CD4-positive, alpha-beta T cell (primary cell): ENCODE measurements at regions of chr6 and their contacts with region 1.

Region 1: GRCh38 chr6:142207265-142207877 is 60.3 kb downstream of the VTA1 start:
- DNase-seq: peak; percentile 5 to 68 (median 26)
- ATAC-seq: peak; percentile 64
- H3K4me3 ChIP-seq: no peak overlapping the region
- H3K4me3 Mint-ChIP-seq: no peak overlapping the region
- H3K27ac ChIP-seq: no peak overlapping the region
- H3K27ac Mint-ChIP-seq: peak overlapping the region; percentile 1
- H3K4me1 ChIP-seq: no peaks in the 10 kb centered on the region
- H3K4me1 Mint-ChIP-seq: no peaks in the 10 kb centered on the region
- H3K27me3 ChIP-seq: no peaks in the 10 kb centered on the region
- H3K27me3 Mint-ChIP-seq: no peaks in the 10 kb centered on the region
- CTCF ChIP-seq: peak; percentile 84

Region 2: DNA sequence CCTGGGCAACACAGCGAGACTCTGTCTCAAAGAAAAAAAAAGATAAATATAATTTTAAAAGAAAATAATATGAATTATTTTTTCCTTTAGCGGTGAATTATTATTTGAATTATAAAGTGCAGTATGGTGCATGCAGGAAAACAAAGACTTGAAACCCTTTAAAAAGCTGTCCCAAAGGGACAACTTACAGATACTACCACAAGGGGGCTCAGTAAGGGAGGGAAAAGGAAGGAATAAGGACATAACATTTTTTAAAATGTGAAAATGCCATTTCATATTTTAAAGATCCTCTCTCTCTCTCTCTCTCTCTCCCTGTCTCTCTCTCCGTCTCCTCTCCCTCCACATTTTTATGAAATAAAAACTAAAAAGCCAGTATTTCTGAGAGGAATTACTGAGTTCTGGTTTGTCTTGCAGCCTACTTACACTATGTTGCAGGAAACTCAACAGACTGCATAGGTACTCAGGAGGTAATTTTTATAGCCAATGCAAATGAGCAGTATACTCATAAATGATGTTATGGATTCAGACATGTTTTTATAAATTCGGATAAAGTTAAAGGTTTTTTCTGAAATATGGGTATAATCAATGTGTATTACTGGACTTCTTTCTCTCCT is 529.7 kb before region 1 on chr6:
- CTCF ChIA-PET with region 1: no interaction called
- POLR2A ChIA-PET with region 1: no interaction called
- intact Hi-C with region 1: loop called in 1 of 2 experiments (anchors 5 kb)
- DNase-seq: peak in 3 of 14 experiments; percentile 17 to 44 (median 35)
- ATAC-seq: no peak
- H3K4me3 ChIP-seq: no peak overlapping the region
- H3K4me3 Mint-ChIP-seq: no peak overlapping the region
- H3K27ac ChIP-seq: no peak overlapping the region
- H3K27ac Mint-ChIP-seq: no peak overlapping the region
- H3K4me1 ChIP-seq: no peaks in the 10 kb centered on the region
- H3K4me1 Mint-ChIP-seq: no peaks in the 10 kb centered on the region
- H3K27me3 ChIP-seq: no peaks in the 10 kb centered on the region
- H3K27me3 Mint-ChIP-seq: no peaks in the 10 kb centered on the region
- CTCF ChIP-seq: peak; percentile 52

Region 3: GRCh38 chr6:141986457-141986856 is 220.9 kb before region 1 on chr6:
- CTCF ChIA-PET with region 1: no interaction called
- POLR2A ChIA-PET with region 1: no interaction called
- intact Hi-C with region 1: loop called in 1 of 2 experiments (anchors 2 kb)
- DNase-seq: no peak
- ATAC-seq: no peak
- H3K4me3 ChIP-seq: no peak overlapping the region
- H3K4me3 Mint-ChIP-seq: no peak overlapping the region
- H3K27ac ChIP-seq: no peak overlapping the region
- H3K27ac Mint-ChIP-seq: no peak overlapping the region
- H3K4me1 ChIP-seq: no peaks in the 10 kb centered on the region
- H3K4me1 Mint-ChIP-seq: no peaks in the 10 kb centered on the region
- H3K27me3 ChIP-seq: peaks cover 0 to 3% of the 10 kb centered on the region in 2 experiments
- H3K27me3 Mint-ChIP-seq: no peaks in the 10 kb centered on the region
- CTCF ChIP-seq: no peak

Region 4: GRCh38 chr6:142155895-142156757 is 51.2 kb before region 1 on chr6:
- CTCF ChIA-PET with region 1: interaction called, 16 read pairs
- POLR2A ChIA-PET with region 1: no interaction called
- intact Hi-C with region 1: no loop called
- DNase-seq: peak in 3 of 14 experiments; percentile 38 to 48 (median 45)
- ATAC-seq: peak; percentile 76
- H3K4me3 ChIP-seq: no peak overlapping the region
- H3K4me3 Mint-ChIP-seq: no peak overlapping the region
- H3K27ac ChIP-seq: no peak overlapping the region
- H3K27ac Mint-ChIP-seq: peak overlapping the region; percentile 28
- H3K4me1 ChIP-seq: peaks cover 4% of the 10 kb centered on the region
- H3K4me1 Mint-ChIP-seq: peaks cover 67% of the 10 kb centered on the region
- H3K27me3 ChIP-seq: no peaks in the 10 kb centered on the region
- H3K27me3 Mint-ChIP-seq: no peaks in the 10 kb centered on the region
- CTCF ChIP-seq: peak; percentile 68